BJ (cell line): ENCODE measurements at regions of chr2 and their contacts with region 1.

Region 1: GRCh38 chr2:168184681-168185513 is 62.5 kb downstream of the STK39 start:
- DNase-seq: peak; percentile 19
- H3K4me3 ChIP-seq: no peak overlapping the region
- H3K27me3 ChIP-seq: no peaks in the 10 kb centered on the region
- CTCF ChIP-seq: no peak

Region 2: DNA sequence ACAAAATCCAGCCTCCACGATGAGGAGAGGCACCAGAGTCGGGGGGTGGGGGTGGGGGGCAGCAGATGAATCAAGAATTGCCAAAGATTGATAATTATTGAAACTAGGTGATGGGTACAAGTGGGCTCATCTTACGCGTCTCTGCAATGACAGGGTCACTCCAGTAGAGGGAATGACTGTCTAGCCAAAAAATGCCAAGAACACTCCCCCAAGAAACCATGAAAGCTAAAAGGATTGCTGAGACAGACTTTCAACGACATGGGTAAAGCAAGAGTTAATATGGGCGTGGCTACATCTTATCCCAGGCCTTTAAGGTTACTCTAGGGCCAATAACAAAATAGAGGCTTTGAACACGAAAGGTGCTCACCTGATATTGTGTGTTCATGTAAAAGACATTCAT is 24.0 kb before region 1 on chr2:
- CTCF ChIA-PET with region 1: no interaction called
- POLR2A ChIA-PET with region 1: no interaction called
- DNase-seq: no peak
- H3K4me3 ChIP-seq: no peak overlapping the region
- H3K27me3 ChIP-seq: no peaks in the 10 kb centered on the region
- CTCF ChIP-seq: no peak

Region 3: DNA sequence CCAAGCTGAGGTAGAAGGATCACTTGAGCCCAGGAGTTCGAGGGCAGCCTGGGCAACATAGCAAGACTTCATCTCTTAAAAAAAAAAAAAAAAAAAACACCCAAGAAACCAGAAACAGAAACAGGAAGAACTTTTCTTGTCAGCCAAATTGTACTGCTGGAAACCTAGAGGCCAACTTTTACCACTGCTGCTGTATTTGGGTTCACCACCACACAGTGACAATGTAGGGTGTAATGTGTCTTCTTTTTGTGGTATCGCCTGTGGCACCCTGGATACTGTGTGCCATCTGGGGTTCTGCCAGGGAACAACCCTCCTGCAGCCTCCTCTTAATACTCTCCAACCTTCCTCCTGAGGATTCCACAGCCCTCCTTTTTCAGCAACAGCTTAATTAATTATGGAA is 10.1 kb before region 1 on chr2:
- CTCF ChIA-PET with region 1: interaction called, 3 read pairs
- POLR2A ChIA-PET with region 1: interaction called, 10 read pairs
- DNase-seq: no peak
- H3K4me3 ChIP-seq: no peak overlapping the region
- H3K27me3 ChIP-seq: no peaks in the 10 kb centered on the region
- CTCF ChIP-seq: no peak